ENCODE measurements at regions of chr21 and their contacts with region 1.

Region 1: DNA sequence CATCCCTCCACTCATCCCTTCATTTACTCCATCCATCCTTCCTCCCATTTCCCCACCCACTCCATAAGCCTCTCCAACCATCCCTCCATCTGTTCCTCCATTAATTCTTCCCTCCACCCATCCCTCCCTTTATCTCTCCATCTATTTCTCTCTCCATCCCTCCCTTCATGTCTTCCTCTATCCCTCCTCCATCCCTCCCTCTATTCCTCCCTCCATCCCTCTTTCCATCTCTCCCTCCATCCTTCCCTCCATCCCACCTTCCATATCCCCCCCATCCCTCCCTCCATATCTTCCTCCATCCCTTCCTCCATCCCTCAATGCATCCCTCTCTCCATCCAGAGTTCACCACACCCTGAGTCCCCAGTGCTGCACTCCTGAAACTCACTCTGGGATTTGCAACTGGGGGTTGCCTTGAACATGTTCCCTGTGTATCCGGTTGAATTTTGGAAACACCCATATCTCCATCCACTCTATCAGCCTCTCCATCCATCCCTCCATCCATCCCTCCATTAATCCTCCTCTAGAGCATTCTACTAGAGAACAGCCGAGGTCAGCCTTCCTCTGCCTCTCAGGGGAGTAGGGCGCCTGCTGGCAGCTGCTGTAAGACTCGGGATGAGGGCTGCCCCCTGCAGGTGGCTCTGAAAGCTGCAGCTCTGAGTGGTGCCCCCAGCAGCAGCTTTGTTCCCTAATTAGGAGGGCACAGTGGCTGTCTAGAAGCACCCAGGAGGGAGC is 39.4 kb downstream of the ABCG1 start:
- H3K4me3 ChIP-seq: no peak overlapping the region
- H3K27ac ChIP-seq: no peak overlapping the region
- H3K4me1 ChIP-seq: no peaks in the 10 kb centered on the region
- CTCF ChIP-seq: no peak; the same call in none of the 2 replicates

Region 2: GRCh38 chr21:42145569-42146272 is 112.6 kb before region 1 on chr21:
- CTCF ChIA-PET with region 1: interaction called, 46 read pairs
- POLR2A ChIA-PET with region 1: interaction called, 3 read pairs
- H3K4me3 ChIP-seq: no peak overlapping the region
- H3K27ac ChIP-seq: no peak overlapping the region
- H3K4me1 ChIP-seq: no peaks in the 10 kb centered on the region
- CTCF ChIP-seq: peak; percentile 78

Region 3: GRCh38 chr21:42156690-42157577 is 101.4 kb before region 1 on chr21:
- CTCF ChIA-PET with region 1: interaction called, 12 read pairs
- POLR2A ChIA-PET with region 1: no interaction called
- H3K4me3 ChIP-seq: no peak overlapping the region
- H3K27ac ChIP-seq: no peak overlapping the region
- H3K4me1 ChIP-seq: no peaks in the 10 kb centered on the region
- CTCF ChIP-seq: no peak

Region 4: DNA sequence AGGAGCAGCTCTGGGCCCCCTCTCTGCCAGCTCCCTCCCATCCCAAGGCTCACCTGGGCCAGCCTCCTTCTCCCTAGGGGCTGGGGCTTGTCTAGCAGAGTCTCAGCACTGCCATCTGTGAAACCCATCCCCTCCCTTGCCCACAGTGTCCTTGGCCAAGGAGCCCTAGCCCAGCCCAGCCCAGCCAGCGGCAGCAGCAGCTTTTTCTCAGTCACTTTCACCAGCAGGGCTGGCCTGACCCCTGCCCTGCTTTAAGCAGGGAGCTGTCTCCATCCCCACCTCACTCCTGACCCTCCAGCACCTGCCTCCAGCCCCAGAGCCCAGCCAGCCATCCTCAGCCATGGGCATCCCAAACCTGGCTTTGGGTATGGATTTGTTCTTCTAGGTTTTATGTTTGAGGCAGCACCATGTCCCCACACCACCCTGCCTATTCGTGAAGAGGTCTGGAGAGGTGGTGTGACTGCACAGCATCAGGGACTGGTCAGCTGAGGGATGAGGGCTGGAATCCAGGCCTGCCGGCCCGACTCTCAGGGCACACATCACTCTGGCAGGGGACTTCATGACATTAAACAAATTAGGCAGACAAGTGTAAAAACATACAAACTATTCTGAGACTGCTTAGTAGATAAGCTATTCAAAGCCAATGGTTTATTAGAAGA is 75.5 kb before region 1 on chr21:
- CTCF ChIA-PET with region 1: interaction called, 10 read pairs
- POLR2A ChIA-PET with region 1: no interaction called
- H3K4me3 ChIP-seq: no peak overlapping the region
- H3K27ac ChIP-seq: no peak overlapping the region
- H3K4me1 ChIP-seq: no peaks in the 10 kb centered on the region
- CTCF ChIP-seq: no peak

Region 5: GRCh38 chr21:42233067-42233961 is 25.0 kb before region 1 on chr21:
- CTCF ChIA-PET with region 1: interaction called, 32 read pairs
- POLR2A ChIA-PET with region 1: no interaction called
- H3K4me3 ChIP-seq: no peak overlapping the region
- H3K27ac ChIP-seq: no peak overlapping the region; the same call in 1 of the 2 replicates
- H3K4me1 ChIP-seq: peaks cover 22% of the 10 kb centered on the region
- CTCF ChIP-seq: peak; percentile 48; the same call in 1 of the 2 replicates

Region 6: DNA sequence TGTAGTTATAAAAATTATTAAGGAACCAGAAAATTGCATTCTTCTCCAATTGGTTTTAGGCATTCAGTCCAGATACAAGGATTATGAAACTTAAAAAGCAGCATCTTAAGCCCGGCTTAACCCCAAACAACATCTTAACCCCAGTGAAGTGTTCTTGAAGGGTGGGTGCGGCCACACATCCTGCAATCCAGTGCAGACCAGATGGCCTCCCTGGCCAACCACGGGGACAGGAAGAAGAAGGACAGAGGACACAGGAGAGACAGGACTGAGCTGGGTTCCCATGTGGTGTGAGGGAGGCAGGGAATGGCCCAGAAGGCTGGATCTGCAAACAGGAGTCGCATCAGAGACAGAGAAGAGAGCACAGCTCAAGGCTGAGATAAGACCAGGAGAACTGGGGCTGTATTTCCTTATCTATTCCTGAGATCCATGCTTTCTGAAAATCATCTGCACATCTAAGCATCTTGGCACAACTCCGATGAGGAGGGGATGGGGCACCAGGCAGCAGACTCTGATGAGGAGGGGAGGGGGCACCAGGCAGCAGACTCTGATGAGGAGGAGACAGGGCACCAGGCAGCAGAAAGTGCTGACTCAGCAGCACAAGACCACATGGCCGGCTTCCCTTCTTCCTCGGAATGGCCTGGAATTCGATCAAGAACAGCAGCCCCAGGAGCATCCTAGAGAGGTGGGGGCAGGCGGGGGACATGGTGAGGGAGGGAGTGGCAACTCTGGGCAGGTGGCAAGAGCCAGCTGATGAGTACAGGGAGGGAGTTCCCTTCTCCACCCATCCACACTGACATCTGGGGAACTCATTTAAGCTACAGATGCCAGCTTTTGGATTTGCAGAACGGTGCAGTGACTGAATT is 12.8 kb before region 1 on chr21:
- CTCF ChIA-PET with region 1: interaction called, 32 read pairs
- POLR2A ChIA-PET with region 1: no interaction called
- H3K4me3 ChIP-seq: no peak overlapping the region
- H3K27ac ChIP-seq: no peak overlapping the region
- H3K4me1 ChIP-seq: no peaks in the 10 kb centered on the region
- CTCF ChIP-seq: no peak

Region 7: DNA sequence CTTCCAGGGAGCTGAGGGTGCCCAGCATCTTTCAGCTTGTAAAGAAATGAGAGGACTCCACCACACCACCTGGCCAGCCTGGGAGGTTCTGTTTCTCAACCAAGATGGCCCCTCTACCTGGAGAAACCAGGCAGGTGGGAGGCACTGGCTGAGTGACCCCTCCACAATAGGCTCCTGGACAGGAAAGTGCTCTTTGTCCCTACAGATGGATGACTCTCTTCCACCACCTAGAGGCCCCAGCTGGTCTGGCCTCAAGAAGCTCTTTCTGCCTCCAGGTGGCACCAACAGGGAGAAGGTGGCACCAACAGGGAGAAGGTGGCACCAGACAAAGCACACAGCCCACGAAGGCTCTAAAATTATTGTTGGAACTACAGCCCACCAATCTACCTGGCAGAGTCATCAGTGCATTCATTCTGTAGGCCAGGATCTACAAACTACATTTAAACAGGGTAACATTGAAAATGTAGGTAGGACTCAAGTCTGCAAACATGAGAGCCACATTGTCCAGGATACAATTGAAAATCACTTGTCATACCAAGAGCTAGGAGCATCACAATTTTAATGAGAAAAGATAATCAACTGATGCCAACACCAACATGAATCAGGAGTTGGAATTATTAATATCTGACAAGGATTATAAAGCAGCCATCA is 123.1 kb after region 1 on chr21:
- CTCF ChIA-PET with region 1: interaction called, 10 read pairs
- POLR2A ChIA-PET with region 1: no interaction called
- H3K4me3 ChIP-seq: no peak overlapping the region
- H3K27ac ChIP-seq: no peak overlapping the region
- H3K4me1 ChIP-seq: no peaks in the 10 kb centered on the region
- CTCF ChIP-seq: no peak